B cell (primary cell): ENCODE measurements at regions of chr1 and their contacts with region 1.

Region 1: GRCh38 chr1:222772996-222773379 is 36.0 kb downstream of the FAM177B start:
- DNase-seq: peak; percentile 82
- ATAC-seq: peak; percentile 78
- H3K4me3 ChIP-seq: peak overlapping the region in 1 of 5 experiments; percentile 17
- H3K4me3 Mint-ChIP-seq: peak overlapping the region; percentile 61
- H3K27ac ChIP-seq: peak overlapping the region; percentile 84 to 85
- H3K27ac Mint-ChIP-seq: peak overlapping the region; percentile 91
- H3K4me1 ChIP-seq: peaks cover 36 to 39% of the 10 kb centered on the region in 2 donors
- H3K4me1 Mint-ChIP-seq: peaks cover 44% of the 10 kb centered on the region
- H3K27me3 ChIP-seq: no peaks in the 10 kb centered on the region
- H3K27me3 Mint-ChIP-seq: no peaks in the 10 kb centered on the region
- CTCF ChIP-seq: no peak

Region 2: GRCh38 chr1:222732216-222733159 is 40.5 kb before region 1 on chr1:
- CTCF ChIA-PET with region 1: interaction called, 7 read pairs
- POLR2A ChIA-PET with region 1: interaction called, 7 read pairs
- intact Hi-C with region 1: loop called (anchors 1 kb)
- DNase-seq: peak; percentile 84
- ATAC-seq: peak; percentile 82
- H3K4me3 ChIP-seq: peak overlapping the region in 3 of 5 experiments; percentile 13 to 45 (median 27)
- H3K4me3 Mint-ChIP-seq: peak overlapping the region; percentile 78
- H3K27ac ChIP-seq: peak overlapping the region; percentile 62 to 84
- H3K27ac Mint-ChIP-seq: peak overlapping the region; percentile 93
- H3K4me1 ChIP-seq: peaks cover 56 to 68% of the 10 kb centered on the region in 2 donors
- H3K4me1 Mint-ChIP-seq: peaks cover 56% of the 10 kb centered on the region
- H3K27me3 ChIP-seq: no peaks in the 10 kb centered on the region
- H3K27me3 Mint-ChIP-seq: no peaks in the 10 kb centered on the region
- CTCF ChIP-seq: no peak

Region 3: DNA sequence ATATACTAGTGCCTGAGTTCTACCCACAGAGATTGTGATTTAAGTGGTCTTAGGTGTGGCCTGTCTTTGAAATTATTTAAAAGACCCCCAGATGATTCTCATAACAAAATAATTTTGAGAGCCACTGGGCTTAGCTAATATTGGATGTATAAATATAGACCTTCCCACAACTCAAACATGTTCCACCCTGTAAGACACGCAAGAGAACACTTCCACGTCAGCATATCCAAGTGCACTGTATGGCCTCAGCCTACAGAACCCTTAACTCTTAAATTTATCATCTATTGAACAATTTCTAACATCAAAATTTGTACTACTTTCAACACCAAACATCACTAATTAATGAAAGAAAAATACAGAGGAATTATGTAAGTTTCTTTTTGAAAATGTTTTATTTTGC is 33.5 kb before region 1 on chr1:
- CTCF ChIA-PET with region 1: interaction called, 31 read pairs
- POLR2A ChIA-PET with region 1: interaction called, 3 read pairs
- intact Hi-C with region 1: loop called (anchors 1 kb)
- DNase-seq: no peak
- ATAC-seq: no peak
- H3K4me3 ChIP-seq: peak overlapping the region; percentile 17 to 53 (median 33)
- H3K4me3 Mint-ChIP-seq: no peak overlapping the region
- H3K27ac ChIP-seq: peak overlapping the region; percentile 50 to 77
- H3K27ac Mint-ChIP-seq: no peak overlapping the region
- H3K4me1 ChIP-seq: peaks cover 58 to 61% of the 10 kb centered on the region in 2 donors
- H3K4me1 Mint-ChIP-seq: peaks cover 44% of the 10 kb centered on the region
- H3K27me3 ChIP-seq: no peaks in the 10 kb centered on the region
- H3K27me3 Mint-ChIP-seq: no peaks in the 10 kb centered on the region
- CTCF ChIP-seq: no peak

Region 4: DNA sequence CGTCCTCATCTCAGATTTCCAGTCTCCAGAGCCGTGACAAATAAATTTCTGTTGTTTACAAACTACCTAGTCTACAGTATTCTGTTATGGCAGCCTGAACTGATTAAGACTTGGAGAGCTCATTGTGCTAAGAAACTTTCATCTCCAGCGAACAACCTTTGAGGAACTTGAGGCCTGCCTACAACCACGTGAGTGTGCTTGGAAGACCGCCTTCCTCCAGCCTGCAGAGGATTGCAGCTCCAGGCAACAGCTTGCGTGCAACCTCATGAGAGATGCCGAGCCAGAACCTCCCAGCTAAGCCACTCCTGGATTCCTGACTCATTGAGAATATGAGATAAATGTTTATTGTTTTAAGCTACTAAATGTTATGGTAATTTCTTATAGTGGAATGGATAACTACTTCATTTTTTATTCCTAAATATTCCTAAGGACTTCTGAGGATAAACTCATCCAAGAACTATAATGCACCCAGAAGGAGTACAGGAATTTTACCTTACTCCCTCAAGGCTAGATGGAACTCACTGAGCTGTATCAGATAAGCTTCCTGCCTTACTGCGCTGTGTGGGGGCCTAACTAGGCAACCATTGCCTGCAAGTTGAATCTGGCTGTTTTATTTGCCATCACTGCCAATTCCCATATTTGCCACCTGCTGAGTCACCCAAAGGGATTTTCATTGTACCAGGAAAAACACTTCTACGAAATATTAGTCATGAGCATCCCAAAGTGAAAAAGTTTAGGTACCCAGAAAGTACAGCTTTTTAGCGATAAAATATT is 18.4 kb before region 1 on chr1:
- CTCF ChIA-PET with region 1: interaction called, 22 read pairs
- POLR2A ChIA-PET with region 1: interaction called, 19 read pairs
- intact Hi-C with region 1: loop called (anchors 2 kb)
- DNase-seq: no peak
- ATAC-seq: no peak
- H3K4me3 ChIP-seq: no peak overlapping the region
- H3K4me3 Mint-ChIP-seq: peak overlapping the region; percentile 58
- H3K27ac ChIP-seq: no peak overlapping the region
- H3K27ac Mint-ChIP-seq: peak overlapping the region; percentile 79
- H3K4me1 ChIP-seq: peaks cover 56 to 57% of the 10 kb centered on the region in 2 donors
- H3K4me1 Mint-ChIP-seq: peaks cover 58% of the 10 kb centered on the region
- H3K27me3 ChIP-seq: no peaks in the 10 kb centered on the region
- H3K27me3 Mint-ChIP-seq: no peaks in the 10 kb centered on the region
- CTCF ChIP-seq: no peak

Region 5: GRCh38 chr1:222798116-222798515 is 25.1 kb after region 1 on chr1:
- CTCF ChIA-PET with region 1: interaction called, 6 read pairs
- POLR2A ChIA-PET with region 1: interaction called, 6 read pairs
- intact Hi-C with region 1: loop called (anchors 2 kb)
- DNase-seq: peak; percentile 61
- ATAC-seq: peak; percentile 98
- H3K4me3 ChIP-seq: no peak overlapping the region
- H3K4me3 Mint-ChIP-seq: no peak overlapping the region
- H3K27ac ChIP-seq: no peak overlapping the region
- H3K27ac Mint-ChIP-seq: peak overlapping the region; percentile 70
- H3K4me1 ChIP-seq: peaks cover 14 to 18% of the 10 kb centered on the region in 2 donors
- H3K4me1 Mint-ChIP-seq: peaks cover 13% of the 10 kb centered on the region
- H3K27me3 ChIP-seq: no peaks in the 10 kb centered on the region
- H3K27me3 Mint-ChIP-seq: no peaks in the 10 kb centered on the region
- CTCF ChIP-seq: no peak

Region 6: GRCh38 chr1:222814536-222815439 is 41.8 kb after region 1 on chr1 and contains the start of gene DISP1:
- CTCF ChIA-PET with region 1: no interaction called
- POLR2A ChIA-PET with region 1: no interaction called
- intact Hi-C with region 1: loop called (anchors 1 kb)
- DNase-seq: peak; percentile 80
- ATAC-seq: peak; percentile 86
- H3K4me3 ChIP-seq: peak within 1 kb of the TSS; percentile 84 to 99 (median 94)
- H3K4me3 Mint-ChIP-seq: peak within 1 kb of the TSS; percentile 94
- H3K27ac ChIP-seq: peak within 1 kb of the TSS; percentile 81 to 90
- H3K27ac Mint-ChIP-seq: peak within 1 kb of the TSS; percentile 95
- H3K4me1 ChIP-seq: peaks cover 17 to 23% of the 10 kb centered on the region in 2 donors
- H3K4me1 Mint-ChIP-seq: peaks cover 39% of the 10 kb centered on the region
- H3K27me3 ChIP-seq: no peaks in the 10 kb centered on the region
- H3K27me3 Mint-ChIP-seq: no peaks in the 10 kb centered on the region
- CTCF ChIP-seq: no peak
- total RNA-seq, gene DISP1: 12.0 and 12.6 TPM in 2 replicates

Region 7: DNA sequence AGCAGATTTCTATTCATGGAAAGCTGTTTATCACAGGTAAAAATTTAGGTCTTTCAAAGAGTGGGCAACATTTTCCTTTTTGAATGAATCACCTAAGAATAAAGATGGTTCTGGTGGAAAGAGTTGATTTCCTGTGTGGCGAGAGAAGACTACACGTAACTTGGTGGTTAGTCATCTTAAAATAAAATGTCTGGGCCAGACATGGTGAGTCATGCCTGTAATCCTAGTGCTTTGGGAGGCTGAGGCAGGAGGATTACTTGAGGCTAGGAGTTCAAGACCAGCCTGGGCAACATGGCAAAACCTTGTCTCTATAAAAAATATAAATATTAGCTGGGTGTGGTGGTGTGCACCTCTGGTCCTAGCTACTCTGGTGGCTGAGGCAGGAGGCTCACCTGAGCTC is 107.6 kb after region 1 on chr1:
- CTCF ChIA-PET with region 1: no interaction called
- POLR2A ChIA-PET with region 1: no interaction called
- intact Hi-C with region 1: no loop called
- DNase-seq: no peak
- ATAC-seq: no peak
- H3K4me3 ChIP-seq: no peak overlapping the region
- H3K4me3 Mint-ChIP-seq: no peak overlapping the region
- H3K27ac ChIP-seq: no peak overlapping the region
- H3K27ac Mint-ChIP-seq: no peak overlapping the region
- H3K4me1 ChIP-seq: no peaks in the 10 kb centered on the region
- H3K4me1 Mint-ChIP-seq: peaks cover 10% of the 10 kb centered on the region
- H3K27me3 ChIP-seq: no peaks in the 10 kb centered on the region
- H3K27me3 Mint-ChIP-seq: no peaks in the 10 kb centered on the region
- CTCF ChIP-seq: no peak

Region 8: GRCh38 chr1:223531742-223532341 is 758.9 kb after region 1 on chr1:
- CTCF ChIA-PET with region 1: no interaction called
- POLR2A ChIA-PET with region 1: no interaction called
- intact Hi-C with region 1: no loop called
- DNase-seq: no peak
- ATAC-seq: no peak
- H3K4me3 ChIP-seq: no peak overlapping the region
- H3K4me3 Mint-ChIP-seq: no peak overlapping the region
- H3K27ac ChIP-seq: no peak overlapping the region
- H3K27ac Mint-ChIP-seq: no peak overlapping the region
- H3K4me1 ChIP-seq: no peaks in the 10 kb centered on the region
- H3K4me1 Mint-ChIP-seq: no peaks in the 10 kb centered on the region
- H3K27me3 ChIP-seq: peaks cover 0 to 6% (median 0%) of the 10 kb centered on the region in 4 experiments
- H3K27me3 Mint-ChIP-seq: peaks cover 33% of the 10 kb centered on the region
- CTCF ChIP-seq: peak; percentile 33